Heart right ventricle (tissue), 16 donors: ENCODE measurements at regions of chr10 and their contacts with region 1.

Region 1: DNA sequence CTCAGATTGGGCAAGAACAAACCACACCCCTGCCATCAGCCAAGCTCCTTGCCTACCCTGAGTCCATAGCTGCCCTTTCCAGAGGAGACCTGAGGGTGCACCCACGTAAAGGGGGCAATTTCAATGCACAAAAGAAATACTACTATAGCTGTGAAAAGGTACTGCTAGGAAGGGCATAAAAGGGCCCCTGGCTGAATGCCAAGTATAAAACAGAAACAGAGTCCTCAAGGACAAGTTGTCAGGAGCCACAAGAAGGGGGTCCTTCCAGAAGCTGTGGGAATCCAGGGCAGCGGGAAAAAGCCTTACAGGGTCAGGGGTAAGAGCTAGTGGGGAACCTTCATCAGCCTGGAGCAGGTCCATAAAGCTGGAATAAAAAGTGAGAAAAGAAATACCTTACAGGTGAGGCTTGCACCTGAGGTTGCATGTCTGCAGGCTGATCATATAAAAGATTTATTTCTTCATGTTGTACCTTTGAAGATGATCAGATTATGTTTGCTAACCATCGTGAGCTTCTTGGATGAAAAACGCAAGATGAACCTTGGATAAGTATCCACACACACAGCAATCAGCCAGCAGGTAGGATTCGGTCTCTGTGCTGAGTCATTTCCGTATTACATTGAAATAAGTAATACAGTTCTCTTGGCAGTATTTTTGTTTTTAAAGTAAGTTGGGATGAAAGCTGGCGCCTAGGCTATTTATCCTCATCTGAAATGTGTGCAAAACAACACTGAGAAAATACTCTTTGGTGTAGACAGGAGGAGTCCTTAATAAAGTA is 108.8 kb upstream of the PRKCQ start:
- DNase-seq: no peak
- ATAC-seq: no peak
- H3K4me3 ChIP-seq: no peak overlapping the region
- H3K27ac ChIP-seq: no peak overlapping the region
- H3K4me1 ChIP-seq: no peaks in the 10 kb centered on the region
- H3K27me3 ChIP-seq: peaks cover 0 to 13% (median 3%) of the 10 kb centered on the region in 7 donors
- CTCF ChIP-seq: no peak

Region 2: GRCh38 chr10:6580279-6581029 is 108.4 kb before region 1 on chr10:
- intact Hi-C with region 1: loop called in 2 of 10 experiments (anchors 5 to 10 kb)
- DNase-seq: peak; percentile 33 to 74
- ATAC-seq: peak; percentile 57 to 93 (median 86)
- H3K4me3 ChIP-seq: peak overlapping the region in 9 of 10 donors; percentile 44 to 73 (median 52)
- H3K27ac ChIP-seq: peak overlapping the region in 2 of 10 donors; percentile 25 to 90
- H3K4me1 ChIP-seq: peaks cover 0 to 23% (median 4%) of the 10 kb centered on the region in 9 donors
- H3K27me3 ChIP-seq: peaks cover 0 to 74% (median 39%) of the 10 kb centered on the region in 7 donors
- CTCF ChIP-seq: peak; percentile 36 to 69 (median 48)

Region 3: GRCh38 chr10:7424315-7424714 is 735.5 kb after region 1 on chr10:
- intact Hi-C with region 1: loop called in 1 of 10 experiments (anchors 10 kb)
- DNase-seq: no peak
- ATAC-seq: no peak
- H3K4me3 ChIP-seq: no peak overlapping the region
- H3K27ac ChIP-seq: no peak overlapping the region
- H3K4me1 ChIP-seq: no peaks in the 10 kb centered on the region
- H3K27me3 ChIP-seq: peaks cover 0 to 44% (median 12%) of the 10 kb centered on the region in 7 donors
- CTCF ChIP-seq: no peak